Activated CD4-positive, alpha-beta T cell treated with anti-CD3 and anti-CD28 coated beads, Interleukin-2, amount 10 ng/mL, durations not matched to agents 7 days and 5 days (primary cell): ENCODE measurements at regions of chr2 and their contacts with region 1.

Region 1: DNA sequence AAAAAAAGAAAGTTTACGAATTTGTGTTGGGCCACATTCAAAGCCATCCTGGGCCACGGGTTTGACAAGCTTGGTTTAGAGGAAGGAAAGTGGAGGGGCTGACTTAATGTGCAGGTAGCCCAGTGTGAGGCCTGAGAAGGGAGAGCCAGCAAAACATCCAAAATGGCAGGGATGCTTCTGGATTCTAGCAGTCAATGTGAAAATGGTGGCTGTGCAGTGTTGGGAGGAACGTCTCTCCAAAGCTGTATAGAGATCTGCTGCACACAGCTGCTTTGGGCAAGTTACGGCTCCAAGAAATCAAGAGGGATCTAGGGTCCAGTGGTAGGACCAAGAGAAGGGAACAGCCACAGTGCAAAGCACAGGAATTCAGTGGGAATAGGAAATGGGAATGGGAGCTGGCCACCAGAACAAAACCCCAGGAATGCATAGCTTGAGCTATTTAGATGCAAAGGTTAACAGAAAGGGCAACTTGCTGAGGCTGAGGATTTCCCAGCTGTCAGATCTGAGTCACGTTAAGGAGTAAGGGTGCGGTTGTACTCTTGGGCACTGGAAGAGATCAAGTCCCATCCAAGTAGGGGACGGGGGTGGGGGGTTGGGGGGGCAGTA is 70.6 kb downstream of the B3GNT2 start:
- DNase-seq: no peak
- H3K4me3 Mint-ChIP-seq: no peak overlapping the region
- H3K27ac Mint-ChIP-seq: no peak overlapping the region
- H3K4me1 Mint-ChIP-seq: no peaks in the 10 kb centered on the region
- H3K27me3 Mint-ChIP-seq: peaks cover 3% of the 10 kb centered on the region

Region 2: DNA sequence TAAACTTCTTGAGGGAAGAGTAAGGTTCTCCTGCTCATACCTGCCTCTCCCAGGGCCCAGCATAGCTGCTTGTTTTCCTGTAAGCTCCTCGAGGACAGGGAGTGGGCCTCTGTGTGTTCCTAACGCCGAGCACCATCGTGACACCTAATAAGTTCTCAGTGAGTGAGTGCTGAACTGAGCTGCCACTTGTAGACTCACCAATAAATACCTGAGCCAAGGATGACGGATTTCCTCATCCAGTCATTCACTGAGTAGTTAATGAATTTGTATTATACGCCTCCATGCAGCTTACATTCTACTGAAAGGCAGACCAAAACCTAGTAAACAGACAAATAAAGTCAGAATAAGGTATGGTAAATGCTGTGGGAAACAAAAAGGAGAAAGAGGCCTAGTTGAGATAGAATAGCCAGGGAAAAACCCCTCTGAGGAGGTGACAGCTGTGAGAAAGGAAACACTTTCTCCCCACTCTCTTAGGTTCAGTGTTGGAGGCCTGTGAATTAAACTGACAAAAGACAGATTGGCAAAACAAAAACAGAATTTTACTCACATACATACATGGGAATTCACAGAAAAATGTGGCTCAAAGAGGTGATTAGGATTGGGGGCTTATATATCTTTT is 68.0 kb after region 1 on chr2:
- CTCF ChIA-PET with region 1: no interaction called
- POLR2A ChIA-PET with region 1: no interaction called
- DNase-seq: no peak
- H3K4me3 Mint-ChIP-seq: no peak overlapping the region
- H3K27ac Mint-ChIP-seq: no peak overlapping the region
- H3K4me1 Mint-ChIP-seq: no peaks in the 10 kb centered on the region
- H3K27me3 Mint-ChIP-seq: no peaks in the 10 kb centered on the region

Region 3: DNA sequence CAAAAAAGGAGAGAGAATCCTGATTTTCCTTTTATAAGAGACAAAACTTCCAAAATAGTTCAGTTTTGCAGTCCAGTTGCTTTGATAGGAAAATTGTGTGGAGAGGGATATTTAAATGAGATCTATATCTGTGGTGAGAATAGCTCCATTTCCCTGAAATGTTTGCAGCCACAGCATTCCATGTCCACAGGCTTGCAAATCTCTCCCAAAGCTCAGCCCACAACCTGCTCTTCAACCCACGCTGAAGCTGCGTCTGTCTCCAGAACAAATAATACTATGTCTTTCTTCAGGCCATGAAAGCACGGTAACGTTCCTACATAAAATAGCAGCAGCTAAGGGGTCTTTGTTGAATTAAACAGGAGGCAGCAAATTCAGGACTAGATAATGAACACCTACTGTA is 207.6 kb after region 1 on chr2:
- CTCF ChIA-PET with region 1: no interaction called
- POLR2A ChIA-PET with region 1: interaction called, 11 read pairs
- DNase-seq: no peak
- H3K4me3 Mint-ChIP-seq: no peak overlapping the region
- H3K27ac Mint-ChIP-seq: no peak overlapping the region
- H3K4me1 Mint-ChIP-seq: peaks cover 3% of the 10 kb centered on the region
- H3K27me3 Mint-ChIP-seq: peaks cover 4% of the 10 kb centered on the region